Thyroid gland (tissue), 4 donors: ENCODE measurements at regions of chr19 and their contacts with region 1.

Region 1: GRCh38 chr19:3618144-3618810 is 8.3 kb downstream of the CACTIN start:
- DNase-seq: peak; percentile 39 to 40
- H3K4me3 ChIP-seq: no peak overlapping the region
- H3K27ac ChIP-seq: no peak overlapping the region
- H3K4me1 ChIP-seq: no peaks in the 10 kb centered on the region
- H3K27me3 ChIP-seq: no peaks in the 10 kb centered on the region
- CTCF ChIP-seq: peak; percentile 58 to 90 (median 70)
- POLR2A ChIP-seq: no peak

Region 2: GRCh38 chr19:3544742-3545668 is 73.3 kb before region 1 on chr19:
- intact Hi-C with region 1: loop called (anchors 2 kb)
- DNase-seq: peak; percentile 49 to 60
- H3K4me3 ChIP-seq: no peak overlapping the region
- H3K27ac ChIP-seq: no peak overlapping the region
- H3K4me1 ChIP-seq: no peaks in the 10 kb centered on the region
- H3K27me3 ChIP-seq: no peaks in the 10 kb centered on the region
- CTCF ChIP-seq: peak; percentile 63 to 92 (median 77)
- POLR2A ChIP-seq: no peak

Region 3: DNA sequence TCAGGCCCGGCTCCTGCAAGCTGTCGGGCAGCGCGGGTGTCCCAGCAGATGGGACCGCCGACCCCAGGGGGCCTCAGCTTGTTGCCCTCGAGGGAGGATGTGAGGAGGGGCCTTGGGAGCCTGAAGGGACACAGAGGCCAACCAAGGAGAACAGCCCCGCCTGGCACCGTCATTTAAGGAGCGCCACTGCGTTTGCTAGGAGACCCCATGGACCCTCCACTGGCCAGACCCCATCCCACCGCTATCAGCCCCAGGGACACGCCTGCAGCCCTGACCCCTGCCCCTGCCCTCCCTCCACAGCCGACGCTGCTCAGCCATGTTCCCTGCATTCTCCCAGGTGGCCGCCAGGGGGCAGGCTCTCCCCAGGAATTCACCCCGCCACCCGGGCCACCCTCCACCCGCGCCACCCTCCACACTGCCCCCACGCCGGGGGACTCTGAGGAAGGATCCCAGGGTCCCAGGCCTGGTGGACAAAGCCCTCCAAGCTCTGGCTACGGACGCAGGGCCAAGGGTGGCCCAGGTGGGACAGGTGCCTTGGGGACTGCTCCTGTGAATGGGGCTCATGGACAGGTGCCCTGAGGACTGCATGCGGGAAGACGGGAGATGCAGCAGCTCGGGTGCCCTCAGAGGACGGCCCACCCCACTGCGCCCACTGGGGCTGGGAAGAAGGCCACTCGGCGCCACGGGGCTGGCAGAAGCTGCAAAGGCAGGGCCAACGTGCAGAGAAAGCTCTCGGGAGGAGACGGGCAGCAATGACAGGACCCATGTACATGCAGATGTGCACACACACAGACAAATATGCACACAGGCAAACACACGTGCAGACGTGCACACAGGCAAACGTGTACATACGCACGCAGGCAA is 47.6 kb after region 1 on chr19:
- intact Hi-C with region 1: loop called (anchors 2 kb)
- DNase-seq: peak; percentile 51 to 57
- H3K4me3 ChIP-seq: no peak overlapping the region
- H3K27ac ChIP-seq: no peak overlapping the region
- H3K4me1 ChIP-seq: peaks cover 0 to 25% of the 10 kb centered on the region in 2 donors
- H3K27me3 ChIP-seq: no peaks in the 10 kb centered on the region
- CTCF ChIP-seq: peak; percentile 85 to 96 (median 88)
- POLR2A ChIP-seq: no peak